ENCODE measurements at regions of chr16 and their contacts with region 1.

Region 1: DNA sequence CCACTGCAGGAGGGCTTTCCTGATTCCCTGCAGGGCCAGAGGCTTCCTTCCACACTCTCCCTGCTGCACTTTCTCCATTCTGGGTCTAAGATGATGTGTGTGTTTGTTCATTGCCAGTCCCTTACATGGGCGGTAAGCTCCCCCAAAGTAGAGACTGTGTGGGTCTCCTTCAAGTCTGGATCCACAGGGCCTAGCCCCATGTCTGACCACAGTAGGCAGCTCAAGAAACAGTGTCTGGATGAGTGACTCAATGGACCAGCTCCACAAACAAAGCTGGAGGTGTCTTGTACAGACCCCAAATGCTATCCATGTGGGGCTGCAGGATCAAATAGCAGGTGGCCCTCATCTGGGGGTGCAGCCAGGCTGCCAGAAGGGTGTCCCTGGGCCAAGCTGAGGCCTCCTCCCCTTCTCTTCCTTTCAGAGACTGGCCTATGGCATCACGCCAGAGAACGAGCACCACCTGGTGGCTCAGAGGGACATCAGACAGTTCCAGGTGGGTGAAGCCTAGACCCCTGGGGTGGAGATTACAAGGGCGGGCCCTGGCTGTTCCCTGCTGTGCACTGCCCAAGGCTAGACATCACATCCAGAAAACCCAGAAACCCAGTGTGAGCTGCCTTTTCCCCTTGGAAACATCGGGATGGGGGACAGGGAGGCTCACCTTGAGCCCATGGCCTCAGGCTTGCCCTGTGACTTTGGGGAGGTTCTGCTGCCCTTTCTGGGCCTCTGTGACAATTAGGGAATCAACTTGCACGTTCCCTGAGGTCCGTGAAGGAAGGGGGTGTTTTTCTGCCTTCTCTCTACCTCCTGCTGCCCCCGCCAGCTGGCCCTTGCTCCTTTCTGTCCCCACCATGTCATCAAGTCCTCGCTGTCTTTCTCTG is 45.9 kb downstream of the SLC6A2 start:
- DNase-seq: peak; percentile 65
- H3K4me3 ChIP-seq: no peak overlapping the region
- H3K27ac ChIP-seq: peak overlapping the region in 1 of 2 experiments; percentile 76; a peak in 2 of 4 replicates
- H3K4me1 ChIP-seq: peaks cover 0 to 57% of the 10 kb centered on the region in 2 experiments; a peak in 2 of 4 replicates
- H3K27me3 ChIP-seq: no peaks in the 10 kb centered on the region; the same call in 1 of the 2 replicates
- CTCF ChIP-seq: peak; percentile 65
- EP300 ChIP-seq: no peak
- RAD21 ChIP-seq: peak; percentile 63

Region 2: DNA sequence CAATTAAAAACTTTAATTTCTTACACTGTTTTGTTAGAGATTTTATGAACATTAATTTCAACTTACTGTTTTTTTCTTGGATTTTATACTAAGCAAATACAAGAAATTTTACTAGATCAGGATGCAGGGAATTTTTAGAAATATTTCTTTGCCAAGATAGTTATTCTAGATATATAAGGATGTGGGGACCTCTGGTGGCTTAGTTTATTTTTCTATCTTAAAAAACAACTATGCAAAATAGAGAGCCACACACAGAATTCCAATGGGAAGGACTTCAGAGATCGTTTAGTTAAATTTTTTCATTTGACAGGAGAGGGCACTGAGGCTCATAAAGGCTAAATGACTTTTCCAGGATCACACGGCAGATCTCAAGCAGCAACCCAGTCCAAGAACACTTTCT is 158.2 kb before region 1 on chr16:
- CTCF ChIA-PET with region 1: interaction called, 32 read pairs
- POLR2A ChIA-PET with region 1: no interaction called
- DNase-seq: peak; percentile 16
- H3K4me3 ChIP-seq: no peak overlapping the region
- H3K27ac ChIP-seq: peak overlapping the region; percentile 55 to 65; a peak in 2 of 4 replicates
- H3K4me1 ChIP-seq: peaks cover 9 to 15% of the 10 kb centered on the region in 2 experiments; a peak in 3 of 4 replicates
- H3K27me3 ChIP-seq: no peaks in the 10 kb centered on the region
- CTCF ChIP-seq: peak; percentile 65
- EP300 ChIP-seq: no peak
- RAD21 ChIP-seq: peak; percentile 74

Region 3: GRCh38 chr16:55605754-55606336 is 95.8 kb before region 1 on chr16:
- CTCF ChIA-PET with region 1: no interaction called
- POLR2A ChIA-PET with region 1: no interaction called
- DNase-seq: peak; percentile 22
- H3K4me3 ChIP-seq: no peak overlapping the region
- H3K27ac ChIP-seq: peak overlapping the region in 1 of 2 experiments; percentile 3; a peak in 1 of 4 replicates
- H3K4me1 ChIP-seq: peaks cover 0 to 3% of the 10 kb centered on the region in 2 experiments; a peak in 2 of 4 replicates
- H3K27me3 ChIP-seq: no peaks in the 10 kb centered on the region
- CTCF ChIP-seq: no peak
- EP300 ChIP-seq: no peak
- RAD21 ChIP-seq: no peak

Region 4: DNA sequence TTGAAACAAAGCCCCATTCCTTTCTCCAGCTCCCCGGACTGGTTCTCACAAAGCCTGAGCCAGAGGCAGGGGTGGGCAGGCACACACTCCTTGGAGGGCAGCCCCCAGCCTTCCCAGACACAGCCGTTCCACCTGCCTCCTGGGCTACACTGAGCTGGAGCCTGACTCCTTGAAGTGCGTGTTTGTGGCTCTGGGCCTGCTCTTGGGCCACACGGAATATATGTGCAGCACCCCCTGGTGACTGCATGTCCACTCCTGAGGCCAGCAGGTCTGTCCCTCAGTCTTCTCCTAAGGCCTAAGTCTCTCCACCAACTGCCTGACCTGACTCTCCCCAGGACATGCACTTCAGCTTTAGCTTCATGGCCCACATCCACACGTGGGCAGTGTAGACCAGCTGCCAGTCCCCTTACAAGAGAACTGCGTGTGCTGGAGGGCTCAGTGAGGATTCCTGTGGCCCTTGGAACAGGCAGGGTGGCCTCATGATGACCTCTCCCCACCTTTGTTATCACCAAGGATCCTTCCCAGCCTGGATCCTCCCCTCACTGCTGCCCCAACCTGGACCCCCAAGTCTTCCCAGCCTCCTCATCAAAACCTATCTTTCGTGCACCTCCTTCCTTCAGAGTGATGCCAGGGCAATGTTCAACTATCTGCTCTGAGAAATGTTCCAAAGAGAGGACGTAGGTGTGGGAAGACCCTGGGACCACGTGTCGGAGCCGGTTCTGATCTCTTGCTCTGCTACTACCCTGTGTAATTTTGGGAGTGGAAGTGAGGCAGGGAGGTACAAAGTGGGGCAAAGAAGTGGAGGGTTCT is 58.3 kb before region 1 on chr16:
- CTCF ChIA-PET with region 1: interaction called, 12 read pairs
- POLR2A ChIA-PET with region 1: no interaction called
- DNase-seq: no peak
- H3K4me3 ChIP-seq: no peak overlapping the region
- H3K27ac ChIP-seq: peak overlapping the region in 1 of 2 experiments; percentile 98; a peak in 2 of 4 replicates
- H3K4me1 ChIP-seq: peaks cover 0 to 46% of the 10 kb centered on the region in 2 experiments; a peak in 2 of 4 replicates
- H3K27me3 ChIP-seq: peaks cover 6% of the 10 kb centered on the region; the same call in 1 of the 2 replicates
- CTCF ChIP-seq: peak; percentile 23; the same call in 1 of the 2 replicates
- EP300 ChIP-seq: no peak
- RAD21 ChIP-seq: peak; percentile 55

Region 5: GRCh38 chr16:55661941-55662643 is 39.6 kb before region 1 on chr16:
- CTCF ChIA-PET with region 1: interaction called, 51 read pairs
- POLR2A ChIA-PET with region 1: interaction called, 3 read pairs
- DNase-seq: peak; percentile 76
- H3K4me3 ChIP-seq: peak overlapping the region in 1 of 2 experiments; percentile 59; a peak in 1 of 4 replicates
- H3K27ac ChIP-seq: peak overlapping the region in 1 of 2 experiments; percentile 100; a peak in 2 of 4 replicates
- H3K4me1 ChIP-seq: peaks cover 0 to 75% of the 10 kb centered on the region in 2 experiments; a peak in 2 of 4 replicates
- H3K27me3 ChIP-seq: peaks cover 6% of the 10 kb centered on the region; the same call in 1 of the 2 replicates
- CTCF ChIP-seq: no peak
- EP300 ChIP-seq: peak in 1 of 2 experiments; percentile 89; a peak in 2 of 4 replicates
- RAD21 ChIP-seq: peak; percentile 37

Region 6: DNA sequence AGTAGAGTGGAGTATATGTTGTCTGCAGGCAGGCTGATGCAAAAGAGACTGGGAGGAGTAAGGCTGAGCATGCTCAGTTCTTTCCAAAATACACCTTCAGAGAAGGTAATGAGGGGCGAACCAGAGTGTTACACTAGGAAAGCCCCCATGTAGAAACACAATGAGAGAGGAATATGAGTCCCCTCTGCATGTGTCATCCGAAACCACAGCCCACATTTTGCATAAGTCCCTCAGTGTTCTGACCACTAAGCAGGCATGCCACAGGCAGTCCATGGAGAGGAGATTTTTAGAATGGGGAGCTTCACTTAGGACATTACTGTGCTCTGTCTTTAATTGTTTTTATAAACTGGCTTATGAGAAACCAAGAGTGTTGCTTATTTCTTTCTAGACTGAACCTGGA is 13.9 kb before region 1 on chr16:
- CTCF ChIA-PET with region 1: interaction called, 29 read pairs
- POLR2A ChIA-PET with region 1: no interaction called
- DNase-seq: no peak
- H3K4me3 ChIP-seq: no peak overlapping the region
- H3K27ac ChIP-seq: peak overlapping the region in 1 of 2 experiments; percentile 11; a peak in 1 of 4 replicates
- H3K4me1 ChIP-seq: no peaks in the 10 kb centered on the region; a peak in 1 of 4 replicates
- H3K27me3 ChIP-seq: no peaks in the 10 kb centered on the region
- CTCF ChIP-seq: no peak
- EP300 ChIP-seq: no peak
- RAD21 ChIP-seq: no peak

Region 7: DNA sequence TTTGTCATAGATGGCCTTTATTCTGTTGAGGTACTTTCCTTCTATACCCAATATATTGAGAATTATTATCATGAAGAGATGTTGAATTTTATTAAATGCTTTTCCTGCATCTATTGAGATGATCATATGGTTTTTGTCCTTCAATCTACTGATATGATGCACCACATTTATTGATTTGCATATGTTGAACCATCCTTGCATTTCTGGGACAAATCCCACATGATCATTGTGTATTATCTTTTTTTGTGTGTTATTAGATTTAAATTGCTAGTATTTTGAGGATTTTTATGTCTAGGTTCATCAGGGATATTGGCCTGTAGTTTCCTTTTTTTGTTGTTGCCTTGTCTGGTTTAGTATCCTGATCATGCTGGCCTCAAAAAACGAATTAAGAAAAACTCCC is 298.0 kb after region 1 on chr16:
- CTCF ChIA-PET with region 1: no interaction called
- POLR2A ChIA-PET with region 1: no interaction called
- DNase-seq: no peak
- H3K4me3 ChIP-seq: no peak overlapping the region
- H3K27ac ChIP-seq: no peak overlapping the region
- H3K4me1 ChIP-seq: no peaks in the 10 kb centered on the region; a peak in 1 of 4 replicates
- H3K27me3 ChIP-seq: no peaks in the 10 kb centered on the region
- CTCF ChIP-seq: no peak
- EP300 ChIP-seq: no peak
- RAD21 ChIP-seq: no peak

Region 8: GRCh38 chr16:56203052-56203451 is 501.4 kb after region 1 on chr16:
- CTCF ChIA-PET with region 1: no interaction called
- POLR2A ChIA-PET with region 1: no interaction called
- DNase-seq: peak; percentile 44
- H3K4me3 ChIP-seq: no peak overlapping the region
- H3K27ac ChIP-seq: no peak overlapping the region
- H3K4me1 ChIP-seq: peaks cover 0 to 3% of the 10 kb centered on the region in 2 experiments; a peak in 1 of 4 replicates
- H3K27me3 ChIP-seq: no peaks in the 10 kb centered on the region
- CTCF ChIP-seq: peak; percentile 37
- EP300 ChIP-seq: no peak
- RAD21 ChIP-seq: peak; percentile 50